ENCODE measurements at regions of chr21 and their contacts with region 1.

Region 1: DNA sequence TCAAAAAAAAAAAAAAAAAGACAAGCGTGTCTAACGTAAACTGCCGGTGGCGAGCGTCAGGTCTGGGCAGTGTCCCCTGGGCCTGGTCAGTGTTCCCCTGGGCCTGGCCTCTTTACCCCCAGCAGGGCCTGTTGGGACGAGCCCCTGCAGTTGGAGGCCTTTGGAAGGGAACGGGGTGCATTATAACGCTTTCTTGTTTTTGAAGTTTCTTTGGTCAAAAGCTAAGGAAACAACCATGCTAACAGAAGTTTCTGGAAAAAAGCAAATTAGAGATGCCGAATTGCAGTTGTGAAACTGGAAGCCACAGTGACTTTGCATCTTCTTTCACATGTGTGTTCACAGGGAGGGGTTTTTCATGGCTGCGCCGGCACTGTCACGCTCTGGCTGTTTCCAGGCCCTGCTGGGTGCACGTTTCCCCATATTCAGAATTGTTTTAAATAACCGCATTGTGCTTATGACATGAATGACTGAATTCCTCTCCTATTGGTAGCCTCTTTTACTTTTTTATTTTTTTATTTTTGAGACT is 16.0 kb downstream of the RRP1 start:
- DNase-seq: no peak
- H3K4me3 ChIP-seq: no peak overlapping the region
- H3K27ac ChIP-seq: no peak overlapping the region
- H3K4me1 ChIP-seq: peaks cover 20% of the 10 kb centered on the region
- H3K27me3 ChIP-seq: no peaks in the 10 kb centered on the region
- CTCF ChIP-seq: no peak

Region 2: GRCh38 chr21:43975495-43975993 is 170.2 kb after region 1 on chr21:
- CTCF ChIA-PET with region 1: no interaction called
- dilution Hi-C with region 1: no loop called
- in situ Hi-C with region 1: loop called in 1 of 2 experiments (anchors 5 kb)
- intact Hi-C with region 1: no loop called
- DNase-seq: peak; percentile 45
- H3K4me3 ChIP-seq: peak overlapping the region; percentile 19 to 42 (median 37)
- H3K27ac ChIP-seq: no peak overlapping the region
- H3K4me1 ChIP-seq: peaks cover 7% of the 10 kb centered on the region
- H3K27me3 ChIP-seq: no peaks in the 10 kb centered on the region
- CTCF ChIP-seq: peak; percentile 91 to 96

Measured in mammary epithelial cell (primary cell).